Activated T-helper 2 cell treated with anti-CD3 and anti-CD28 coated beads, Interferon-gamma antibody, Interleukin-2, Interleukin-4, amounts not matched to agents 10 μg/mL and 5 μg/mL and 100 μg/mL, durations not matched to agents 14 hours and 24 hours and 36 hours (primary cell): ENCODE measurements at regions of chr3 and their contacts with region 1.

Region 1: GRCh38 chr3:180633722-180634121 is 31.8 kb downstream of the TTC14 start:
- DNase-seq: no peak
- H3K4me3 Mint-ChIP-seq: no peak overlapping the region
- H3K27ac Mint-ChIP-seq: no peak overlapping the region
- H3K4me1 Mint-ChIP-seq: peaks cover 4% of the 10 kb centered on the region
- H3K27me3 Mint-ChIP-seq: peaks cover 8% of the 10 kb centered on the region

Region 2: GRCh38 chr3:180657094-180657493 is 23.4 kb after region 1 on chr3:
- intact Hi-C with region 1: no loop called
- DNase-seq: no peak
- H3K4me3 Mint-ChIP-seq: no peak overlapping the region
- H3K27ac Mint-ChIP-seq: no peak overlapping the region
- H3K4me1 Mint-ChIP-seq: no peaks in the 10 kb centered on the region
- H3K27me3 Mint-ChIP-seq: peaks cover 9% of the 10 kb centered on the region

Region 3: GRCh38 chr3:180679178-180680096 is 45.7 kb after region 1 on chr3 and contains the start of gene CCDC39:
- intact Hi-C with region 1: loop called (anchors 5 kb)
- DNase-seq: peak; percentile 45
- H3K4me3 Mint-ChIP-seq: peak within 1 kb of the TSS; percentile 83
- H3K27ac Mint-ChIP-seq: no peak within 1 kb of the TSS
- H3K4me1 Mint-ChIP-seq: peaks cover 8% of the 10 kb centered on the region
- H3K27me3 Mint-ChIP-seq: peaks cover 44% of the 10 kb centered on the region
- total RNA-seq, gene CCDC39: not detected in 2 replicates